Panc1 (cell line): ENCODE measurements at regions of chr12 and their contacts with region 1.

Region 1: DNA sequence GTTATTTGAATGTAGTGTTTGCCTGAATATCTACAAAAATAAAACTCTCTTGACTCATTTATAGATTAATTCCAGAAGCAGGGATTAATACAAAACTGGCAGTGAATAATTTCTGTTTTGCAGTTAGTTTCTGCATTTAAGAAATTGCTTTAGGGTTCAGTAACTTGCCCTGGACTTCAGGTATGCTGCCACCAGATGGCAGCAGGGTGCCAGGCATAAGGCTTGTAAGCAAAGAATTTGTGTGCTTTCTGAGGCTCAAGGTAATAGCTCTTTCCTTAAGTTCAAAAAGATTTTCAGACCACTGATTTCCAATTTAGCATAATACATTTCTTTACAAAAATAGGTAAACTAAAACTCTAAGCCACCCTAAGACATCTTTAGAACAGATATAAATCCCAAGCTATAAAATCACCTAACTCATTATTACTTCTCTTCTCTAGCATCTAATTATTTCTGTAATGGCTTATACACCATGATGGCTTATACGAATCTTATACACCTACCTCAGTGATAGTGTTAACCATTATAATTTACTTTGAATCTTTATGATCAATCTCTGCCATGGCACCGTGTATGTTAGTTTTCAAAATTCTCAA is 398.3 kb downstream of the APAF1 start:
- DNase-seq: peak; percentile 43
- ATAC-seq: no peak
- H3K4me3 ChIP-seq: no peak overlapping the region
- H3K27ac ChIP-seq: no peak overlapping the region
- H3K4me1 ChIP-seq: no peaks in the 10 kb centered on the region
- H3K27me3 ChIP-seq: no peaks in the 10 kb centered on the region
- CTCF ChIP-seq: peak; percentile 87

Region 2: GRCh38 chr12:99658671-99659349 is 615.4 kb after region 1 on chr12:
- CTCF ChIA-PET with region 1: interaction called, 5 read pairs
- POLR2A ChIA-PET with region 1: no interaction called
- in situ Hi-C with region 1: no loop called
- intact Hi-C with region 1: loop called (anchors 1 kb)
- DNase-seq: no peak
- ATAC-seq: no peak
- H3K4me3 ChIP-seq: no peak overlapping the region
- H3K27ac ChIP-seq: no peak overlapping the region
- H3K4me1 ChIP-seq: no peaks in the 10 kb centered on the region
- H3K27me3 ChIP-seq: no peaks in the 10 kb centered on the region
- CTCF ChIP-seq: peak; percentile 24; the same call in 1 of the 2 replicates